Psoas muscle (tissue), 8 donors: ENCODE measurements at regions of chr17 and their contacts with region 1.

Region 1: GRCh38 chr17:50798424-50799288 is 31.3 kb upstream of the ANKRD40CL start:
- DNase-seq: no peak
- ATAC-seq: no peak
- H3K4me3 ChIP-seq: no peak overlapping the region
- H3K27ac ChIP-seq: no peak overlapping the region
- H3K4me1 ChIP-seq: no peaks in the 10 kb centered on the region
- H3K27me3 ChIP-seq: no peaks in the 10 kb centered on the region
- CTCF ChIP-seq: no peak

Region 2: DNA sequence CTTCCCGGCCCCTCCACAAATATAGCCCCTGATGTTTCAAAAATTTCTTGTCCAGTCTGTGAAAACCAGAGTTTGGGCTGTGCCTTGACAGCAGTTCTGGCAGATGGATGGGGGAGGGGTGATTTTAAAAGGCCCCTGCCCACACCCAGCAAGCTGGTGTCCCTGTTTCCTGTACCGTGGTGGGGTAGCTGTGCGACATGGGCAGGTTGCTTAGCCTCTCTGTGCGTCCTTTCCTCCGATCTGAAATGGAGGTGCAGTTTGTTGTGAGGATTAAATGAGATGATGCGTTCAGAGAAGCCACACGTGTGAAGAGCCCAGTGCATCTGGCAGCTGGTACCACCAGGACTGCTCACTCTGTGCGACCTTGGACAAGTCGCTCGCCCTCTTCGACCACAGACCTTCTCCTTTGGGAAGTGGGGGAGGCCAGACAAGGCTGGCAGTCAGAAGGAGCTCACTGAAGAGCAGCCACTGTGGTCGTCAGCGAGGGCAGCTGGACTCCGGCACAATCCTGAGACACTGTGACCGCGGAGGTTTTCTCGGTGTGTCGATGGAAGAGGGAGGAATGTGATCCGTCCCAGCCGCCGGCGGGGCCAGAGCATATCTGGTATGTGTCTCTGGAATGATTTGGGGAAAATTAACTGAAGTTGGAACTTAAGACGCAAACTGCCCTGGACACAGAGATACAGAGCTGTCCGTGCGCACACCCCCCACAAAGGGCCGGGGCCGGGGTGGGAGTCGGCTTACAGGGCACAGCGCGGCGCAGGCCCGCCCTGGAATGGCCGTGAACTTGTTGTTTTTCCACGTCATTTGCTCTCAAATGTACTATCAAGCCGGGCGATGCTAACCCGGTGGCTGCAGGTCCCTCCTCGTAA is 36.0 kb after region 1 on chr17:
- intact Hi-C with region 1: loop called in 1 of 2 experiments (anchors 5 kb)
- DNase-seq: no peak
- ATAC-seq: peak; percentile 39 to 82 (median 64)
- H3K4me3 ChIP-seq: peak overlapping the region; percentile 65
- H3K27ac ChIP-seq: peak overlapping the region; percentile 46
- H3K4me1 ChIP-seq: peaks cover 4% of the 10 kb centered on the region
- H3K27me3 ChIP-seq: no peaks in the 10 kb centered on the region
- CTCF ChIP-seq: no peak